GM12878 (cell line): ENCODE measurements at regions of chr2 and their contacts with region 1.

Region 1: DNA sequence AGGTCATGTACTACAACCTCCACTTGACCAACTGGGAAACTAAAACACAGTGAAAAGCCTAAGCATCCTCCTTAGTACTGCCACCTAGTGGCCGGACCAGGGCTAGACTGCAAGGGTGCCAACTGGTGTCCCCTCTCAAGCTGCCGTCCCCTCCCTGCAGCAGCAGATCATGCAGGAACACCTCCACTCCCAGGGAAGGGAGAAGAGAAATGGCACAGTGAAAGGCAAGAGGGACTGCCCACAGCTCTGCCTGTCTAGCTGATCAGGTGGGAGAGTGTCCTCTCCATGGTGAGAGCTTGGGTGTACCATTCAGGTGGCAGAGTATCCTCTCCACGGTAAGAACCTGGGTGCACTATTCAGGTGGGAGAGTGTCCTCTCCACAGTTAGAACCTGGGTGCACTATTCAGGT is 78.1 kb downstream of the AAK1 start:
- DNase-seq: peak; percentile 40
- ATAC-seq: peak; percentile 99
- H3K4me3 ChIP-seq: no peak overlapping the region
- H3K27ac ChIP-seq: no peak overlapping the region
- H3K4me1 ChIP-seq: 0 out of 2 replicates have a peak, but pooled peaks cover 2% of the 10 kb centered on the region
- H3K27me3 ChIP-seq: no peaks in the 10 kb centered on the region
- CTCF ChIP-seq: peak; percentile 83 to 97 (median 89)
- EP300 ChIP-seq: no peak
- POLR2A ChIP-seq: no peak
- RAD21 ChIP-seq: peak; percentile 71

Region 2: GRCh38 chr2:68995916-68996315 is 569.5 kb before region 1 on chr2:
- CTCF ChIA-PET with region 1: no interaction called
- POLR2A ChIA-PET with region 1: no interaction called
- RAD21 ChIA-PET with region 1: no interaction called
- SMC1A ChIA-PET with region 1: no interaction called
- in situ Hi-C with region 1: no loop called
- intact Hi-C with region 1: no loop called
- DNase-seq: no peak
- ATAC-seq: no peak
- H3K4me3 ChIP-seq: no peak overlapping the region
- H3K27ac ChIP-seq: no peak overlapping the region
- H3K4me1 ChIP-seq: no peaks in the 10 kb centered on the region
- H3K27me3 ChIP-seq: no peaks in the 10 kb centered on the region; a peak in 1 of 4 replicates
- CTCF ChIP-seq: no peak
- EP300 ChIP-seq: no peak
- POLR2A ChIP-seq: no peak
- RAD21 ChIP-seq: no peak

Region 3: DNA sequence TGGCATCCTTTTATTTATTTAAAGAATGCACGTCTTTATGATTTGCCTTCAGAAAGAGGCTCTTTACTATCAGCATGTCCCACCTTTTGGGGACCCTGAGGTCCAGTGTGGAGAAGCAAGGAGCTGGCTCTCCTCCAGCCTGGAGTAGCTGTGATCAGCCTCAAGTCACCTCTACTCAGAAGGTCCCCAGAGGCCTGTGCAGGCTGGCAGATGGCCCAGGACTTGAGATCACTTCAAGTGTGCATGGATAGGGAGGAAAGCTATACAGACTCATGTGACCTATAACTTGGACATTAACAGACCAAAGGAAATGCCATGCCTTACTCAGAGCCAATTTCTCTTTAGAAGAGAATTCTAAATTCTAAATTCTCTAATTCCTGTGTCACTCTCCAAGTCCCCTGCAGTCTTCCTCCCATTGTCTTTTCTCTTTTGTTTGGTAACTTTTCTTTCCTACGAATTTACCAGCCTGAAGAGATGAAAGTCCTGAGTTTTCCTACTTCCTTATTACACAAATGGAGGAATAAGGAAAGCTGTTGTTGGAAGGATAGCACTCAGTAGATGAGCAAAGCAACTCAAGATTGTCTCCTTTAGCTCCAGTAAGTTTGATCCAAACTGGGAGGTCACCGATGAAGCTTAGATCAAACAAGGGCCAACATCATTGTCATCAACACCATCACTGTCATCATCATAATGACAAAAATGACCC is 342.3 kb before region 1 on chr2:
- CTCF ChIA-PET with region 1: no interaction called
- POLR2A ChIA-PET with region 1: no interaction called
- RAD21 ChIA-PET with region 1: no interaction called
- SMC1A ChIA-PET with region 1: no interaction called
- in situ Hi-C with region 1: no loop called
- intact Hi-C with region 1: no loop called
- DNase-seq: no peak
- ATAC-seq: no peak
- H3K4me3 ChIP-seq: no peak overlapping the region
- H3K27ac ChIP-seq: no peak overlapping the region
- H3K4me1 ChIP-seq: no peaks in the 10 kb centered on the region
- H3K27me3 ChIP-seq: peaks cover 1 to 7% of the 10 kb centered on the region in 2 experiments; a peak in 3 of 4 replicates
- CTCF ChIP-seq: no peak
- EP300 ChIP-seq: no peak
- POLR2A ChIP-seq: no peak
- RAD21 ChIP-seq: no peak

Region 4: GRCh38 chr2:69291004-69291650 is 274.3 kb before region 1 on chr2:
- CTCF ChIA-PET with region 1: no interaction called
- POLR2A ChIA-PET with region 1: no interaction called
- RAD21 ChIA-PET with region 1: no interaction called
- SMC1A ChIA-PET with region 1: no interaction called
- in situ Hi-C with region 1: no loop called
- intact Hi-C with region 1: no loop called
- DNase-seq: no peak
- ATAC-seq: no peak
- H3K4me3 ChIP-seq: no peak overlapping the region
- H3K27ac ChIP-seq: no peak overlapping the region
- H3K4me1 ChIP-seq: no peaks in the 10 kb centered on the region
- H3K27me3 ChIP-seq: peaks cover 0 to 7% of the 10 kb centered on the region in 2 experiments; a peak in 1 of 4 replicates
- CTCF ChIP-seq: no peak
- EP300 ChIP-seq: no peak
- POLR2A ChIP-seq: no peak
- RAD21 ChIP-seq: no peak

Region 5: DNA sequence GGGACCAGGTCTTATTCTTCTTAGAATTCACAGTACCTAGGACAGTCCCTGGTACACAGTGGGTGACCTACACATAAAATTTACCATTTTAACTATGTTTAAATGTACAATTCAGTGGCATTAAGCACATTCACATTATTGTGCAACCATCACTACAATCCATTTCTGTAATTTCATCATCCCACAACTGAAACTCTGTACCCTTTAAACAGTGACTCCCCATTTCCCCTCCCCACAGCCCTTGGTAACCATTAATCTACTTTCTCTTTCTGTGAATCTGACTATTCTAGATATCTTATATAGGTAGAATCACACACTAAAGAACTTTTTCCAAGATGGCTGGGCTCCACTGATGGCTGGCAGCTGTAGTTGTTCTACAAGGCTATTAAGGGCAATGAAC is 220.0 kb before region 1 on chr2:
- CTCF ChIA-PET with region 1: no interaction called
- POLR2A ChIA-PET with region 1: no interaction called
- RAD21 ChIA-PET with region 1: no interaction called
- SMC1A ChIA-PET with region 1: no interaction called
- in situ Hi-C with region 1: no loop called
- intact Hi-C with region 1: no loop called
- DNase-seq: no peak
- ATAC-seq: peak; percentile 58
- H3K4me3 ChIP-seq: no peak overlapping the region
- H3K27ac ChIP-seq: no peak overlapping the region
- H3K4me1 ChIP-seq: no peaks in the 10 kb centered on the region
- H3K27me3 ChIP-seq: no peaks in the 10 kb centered on the region
- CTCF ChIP-seq: no peak
- EP300 ChIP-seq: no peak
- POLR2A ChIP-seq: no peak
- RAD21 ChIP-seq: no peak

Region 6: GRCh38 chr2:69436938-69437750 is 128.3 kb before region 1 on chr2 and contains the start of gene NFU1:
- CTCF ChIA-PET with region 1: interaction called, 23 read pairs
- POLR2A ChIA-PET with region 1: interaction called, 6 read pairs
- RAD21 ChIA-PET with region 1: interaction called, 27 read pairs
- SMC1A ChIA-PET with region 1: interaction called, 9 read pairs
- in situ Hi-C with region 1: no loop called
- intact Hi-C with region 1: no loop called
- DNase-seq: peak; percentile 79
- ATAC-seq: peak; percentile 97
- H3K4me3 ChIP-seq: peak within 1 kb of the TSS; percentile 76
- H3K27ac ChIP-seq: peak within 1 kb of the TSS; percentile 89
- H3K4me1 ChIP-seq: peaks cover 9% of the 10 kb centered on the region; the same call in 1 of the 2 replicates
- H3K27me3 ChIP-seq: no peaks in the 10 kb centered on the region
- CTCF ChIP-seq: peak; percentile 61 to 76 (median 63)
- EP300 ChIP-seq: peak; percentile 21 to 73; a peak in 2 of 4 replicates
- POLR2A ChIP-seq: peak; percentile 98
- RAD21 ChIP-seq: peak; percentile 24; the same call in 1 of the 2 replicates
- polyA plus RNA-seq, gene NFU1: 38.5 to 61.2 TPM

Region 7: GRCh38 chr2:69594341-69594740 is 28.9 kb after region 1 on chr2:
- CTCF ChIA-PET with region 1: interaction called, 28 read pairs
- POLR2A ChIA-PET with region 1: no interaction called
- RAD21 ChIA-PET with region 1: interaction called, 7 read pairs
- SMC1A ChIA-PET with region 1: interaction called, 4 read pairs
- in situ Hi-C with region 1: no loop called
- intact Hi-C with region 1: no loop called
- DNase-seq: no peak
- ATAC-seq: no peak
- H3K4me3 ChIP-seq: no peak overlapping the region
- H3K27ac ChIP-seq: no peak overlapping the region
- H3K4me1 ChIP-seq: peaks cover 21% of the 10 kb centered on the region
- H3K27me3 ChIP-seq: no peaks in the 10 kb centered on the region
- CTCF ChIP-seq: no peak
- EP300 ChIP-seq: no peak
- POLR2A ChIP-seq: no peak
- RAD21 ChIP-seq: no peak

Region 8: GRCh38 chr2:69643602-69644505 is 78.4 kb after region 1 on chr2 and contains the start of gene AAK1:
- CTCF ChIA-PET with region 1: interaction called, 44 read pairs
- POLR2A ChIA-PET with region 1: interaction called, 6 read pairs
- RAD21 ChIA-PET with region 1: interaction called, 11 read pairs
- SMC1A ChIA-PET with region 1: interaction called, 25 read pairs
- in situ Hi-C with region 1: no loop called
- intact Hi-C with region 1: no loop called
- DNase-seq: peak; percentile 68
- ATAC-seq: peak; percentile 69
- H3K4me3 ChIP-seq: peak within 1 kb of the TSS; percentile 85
- H3K27ac ChIP-seq: peak within 1 kb of the TSS; percentile 94
- H3K4me1 ChIP-seq: peaks cover 28% of the 10 kb centered on the region
- H3K27me3 ChIP-seq: no peaks in the 10 kb centered on the region
- CTCF ChIP-seq: 0 out of 6 replicates have a peak, but pooled peaks of 2 of the 3 experiments have one; percentile 0 to 2
- EP300 ChIP-seq: no peak
- POLR2A ChIP-seq: peak; percentile 93
- RAD21 ChIP-seq: no peak
- polyA plus RNA-seq, gene AAK1: 2.9 to 8.0 TPM

Region 9: DNA sequence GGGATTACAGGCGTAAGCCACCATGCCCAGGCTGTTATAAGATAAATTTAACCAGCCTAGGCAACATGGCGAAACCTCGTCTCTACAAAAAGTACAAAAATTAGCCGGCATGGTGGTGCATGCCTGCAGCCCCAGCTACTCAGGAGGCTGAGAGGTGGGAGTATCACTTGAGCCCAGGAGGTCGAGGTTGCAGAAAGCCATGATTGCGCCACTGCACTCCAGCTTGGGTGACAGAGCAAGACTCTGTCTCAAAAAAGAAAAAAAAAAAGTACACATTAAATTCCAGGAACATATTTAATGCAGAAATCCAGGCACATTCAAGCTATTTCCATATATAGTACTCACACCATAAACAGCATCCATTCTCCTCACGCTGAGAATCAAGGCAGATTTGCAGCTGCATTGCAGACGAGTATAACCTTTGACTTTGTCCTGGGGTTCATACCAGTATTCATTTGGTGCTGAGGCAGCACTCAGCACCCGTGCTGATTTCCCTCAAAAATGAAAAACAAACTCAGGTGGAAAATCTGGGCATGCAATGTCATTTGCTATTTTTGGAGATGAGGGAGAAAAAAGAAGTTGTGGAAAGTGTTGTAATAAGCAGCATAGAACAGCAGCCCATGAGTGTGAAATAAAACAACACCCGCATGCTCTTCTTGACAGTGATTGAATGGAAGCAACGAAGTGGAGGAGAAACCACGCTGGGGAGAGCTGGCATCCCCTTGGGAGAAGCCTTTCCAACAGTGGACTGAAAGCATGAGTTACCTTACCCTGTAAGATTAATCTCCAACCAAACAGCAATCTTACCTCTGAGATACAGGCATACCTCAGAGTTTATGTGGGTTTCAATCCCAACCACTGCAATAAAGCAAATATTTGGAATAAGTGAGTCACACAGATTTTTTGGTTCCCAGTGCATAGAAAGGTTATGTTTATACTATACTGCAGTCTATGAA is 129.7 kb after region 1 on chr2:
- CTCF ChIA-PET with region 1: interaction called, 21 read pairs
- POLR2A ChIA-PET with region 1: no interaction called
- RAD21 ChIA-PET with region 1: no interaction called
- SMC1A ChIA-PET with region 1: interaction called, 4 read pairs
- in situ Hi-C with region 1: no loop called
- intact Hi-C with region 1: no loop called
- DNase-seq: no peak
- ATAC-seq: no peak
- H3K4me3 ChIP-seq: no peak overlapping the region
- H3K27ac ChIP-seq: no peak overlapping the region
- H3K4me1 ChIP-seq: peaks cover 13% of the 10 kb centered on the region
- H3K27me3 ChIP-seq: no peaks in the 10 kb centered on the region
- CTCF ChIP-seq: no peak
- EP300 ChIP-seq: no peak
- POLR2A ChIP-seq: no peak
- RAD21 ChIP-seq: no peak

Region 10: DNA sequence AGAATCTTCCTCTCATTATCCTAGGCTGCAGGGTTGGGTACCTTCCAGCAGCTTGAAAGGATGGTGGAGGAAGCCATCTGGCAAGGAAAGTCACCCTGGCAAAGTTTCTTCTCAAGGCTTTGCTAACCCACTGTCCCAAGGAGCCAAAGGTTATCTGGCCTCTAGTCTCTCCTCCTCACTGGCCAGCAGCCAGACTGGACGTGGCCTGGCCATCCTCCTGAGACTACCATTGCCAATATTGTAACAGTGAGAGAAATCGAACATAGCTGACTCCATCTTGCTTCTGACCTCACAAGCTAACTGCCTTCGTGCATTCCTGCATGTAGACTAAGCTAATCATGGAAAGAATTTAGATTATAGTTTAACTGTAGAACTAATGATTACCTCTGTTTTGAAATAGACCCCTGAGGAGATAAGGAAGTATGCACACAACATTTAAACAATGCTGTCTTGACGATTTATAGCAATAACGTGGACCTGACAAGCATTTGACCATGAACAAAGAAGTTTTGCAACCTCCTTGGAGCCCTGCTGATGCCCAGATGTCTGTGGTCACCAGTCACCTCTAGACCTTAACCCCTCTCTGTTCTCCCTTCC is 168.7 kb after region 1 on chr2:
- CTCF ChIA-PET with region 1: interaction called, 13 read pairs
- POLR2A ChIA-PET with region 1: no interaction called
- RAD21 ChIA-PET with region 1: no interaction called
- SMC1A ChIA-PET with region 1: interaction called, 5 read pairs
- in situ Hi-C with region 1: no loop called
- intact Hi-C with region 1: no loop called
- DNase-seq: no peak
- ATAC-seq: no peak
- H3K4me3 ChIP-seq: no peak overlapping the region
- H3K27ac ChIP-seq: no peak overlapping the region
- H3K4me1 ChIP-seq: peaks cover 20% of the 10 kb centered on the region
- H3K27me3 ChIP-seq: no peaks in the 10 kb centered on the region
- CTCF ChIP-seq: no peak
- EP300 ChIP-seq: no peak
- POLR2A ChIP-seq: no peak
- RAD21 ChIP-seq: no peak